ENCODE measurements at regions of chr12 and their contacts with region 1.

Region 1: DNA sequence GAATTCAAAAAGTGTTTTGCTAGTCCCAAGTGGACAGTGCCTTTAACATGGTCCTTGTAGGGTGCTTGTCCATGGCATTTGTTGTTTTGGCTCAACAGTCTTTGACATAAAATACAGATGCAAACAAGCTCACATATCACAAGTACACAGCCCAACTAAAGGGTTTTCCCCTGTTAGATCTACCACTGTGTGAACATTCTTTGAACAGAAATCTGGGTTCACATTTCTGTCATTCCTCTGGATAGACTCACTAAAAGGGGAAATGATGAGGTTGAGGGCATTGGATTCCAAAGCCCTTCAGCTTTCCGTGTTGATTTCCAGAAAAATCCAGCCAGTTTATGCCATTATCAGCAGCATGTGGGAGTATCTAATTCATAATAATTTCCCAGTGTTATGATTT is 54.1 kb downstream of the EP400 start:
- DNase-seq: no peak
- H3K4me3 ChIP-seq: no peak overlapping the region
- H3K27ac ChIP-seq: no peak overlapping the region
- H3K4me1 ChIP-seq: no peaks in the 10 kb centered on the region
- H3K27me3 ChIP-seq: no peaks in the 10 kb centered on the region
- CTCF ChIP-seq: no peak
- EP300 ChIP-seq: no peak
- POLR2A ChIP-seq: no peak
- RAD21 ChIP-seq: no peak

Region 2: GRCh38 chr12:132014092-132014914 is 10.5 kb after region 1 on chr12:
- CTCF ChIA-PET with region 1: interaction called, 20 read pairs
- POLR2A ChIA-PET with region 1: interaction called, 5 read pairs
- DNase-seq: no peak
- H3K4me3 ChIP-seq: no peak overlapping the region
- H3K27ac ChIP-seq: no peak overlapping the region
- H3K4me1 ChIP-seq: no peaks in the 10 kb centered on the region; a peak in 2 of 7 replicates
- H3K27me3 ChIP-seq: no peaks in the 10 kb centered on the region
- CTCF ChIP-seq: no peak
- EP300 ChIP-seq: no peak
- POLR2A ChIP-seq: no peak
- RAD21 ChIP-seq: no peak

Region 3: GRCh38 chr12:132109741-132110140 is 105.9 kb after region 1 on chr12:
- CTCF ChIA-PET with region 1: no interaction called
- POLR2A ChIA-PET with region 1: no interaction called
- DNase-seq: no peak
- H3K4me3 ChIP-seq: no peak overlapping the region
- H3K27ac ChIP-seq: no peak overlapping the region
- H3K4me1 ChIP-seq: peaks cover 0 to 2% (median 0%) of the 10 kb centered on the region in 4 experiments; a peak in 2 of 7 replicates
- H3K27me3 ChIP-seq: no peaks in the 10 kb centered on the region
- CTCF ChIP-seq: no peak
- EP300 ChIP-seq: no peak
- POLR2A ChIP-seq: no peak
- RAD21 ChIP-seq: no peak

Measured in H1 (cell line).